GM10248 (cell line): ENCODE measurements at regions of chr7 and their contacts with region 1.

Region 1: DNA sequence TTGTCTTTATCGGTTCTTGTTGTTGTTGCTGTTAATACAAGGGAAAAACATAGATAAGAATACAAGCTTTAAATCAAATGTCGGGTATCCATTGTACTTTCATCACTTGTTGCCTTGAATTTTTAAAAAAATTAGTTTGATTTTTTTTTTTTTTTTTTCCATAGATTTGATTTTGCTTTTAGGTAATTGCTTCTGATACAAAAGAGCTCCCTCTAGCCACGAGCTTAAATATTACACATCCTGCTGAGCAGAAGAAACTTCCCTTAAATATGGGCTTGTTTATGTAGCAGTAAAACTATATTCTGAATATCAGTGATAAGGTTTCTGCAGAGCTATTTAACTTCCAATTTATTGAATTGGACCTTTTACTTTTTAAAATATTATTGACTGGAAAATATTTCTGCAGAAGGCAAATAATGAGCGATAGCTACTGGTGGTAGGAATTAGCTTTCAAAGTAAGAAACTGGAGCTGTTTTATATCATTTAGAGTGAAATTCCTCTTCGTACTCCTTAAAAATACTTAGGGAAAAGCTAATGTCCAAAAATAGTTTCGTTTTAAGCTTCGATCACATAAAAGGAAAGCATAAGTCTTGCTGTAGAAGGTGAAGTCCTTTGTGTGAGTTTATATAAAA is 216.9 kb downstream of the POLR1F start:
- DNase-seq: peak; percentile 14
- CTCF ChIP-seq: peak; percentile 53

Region 2: DNA sequence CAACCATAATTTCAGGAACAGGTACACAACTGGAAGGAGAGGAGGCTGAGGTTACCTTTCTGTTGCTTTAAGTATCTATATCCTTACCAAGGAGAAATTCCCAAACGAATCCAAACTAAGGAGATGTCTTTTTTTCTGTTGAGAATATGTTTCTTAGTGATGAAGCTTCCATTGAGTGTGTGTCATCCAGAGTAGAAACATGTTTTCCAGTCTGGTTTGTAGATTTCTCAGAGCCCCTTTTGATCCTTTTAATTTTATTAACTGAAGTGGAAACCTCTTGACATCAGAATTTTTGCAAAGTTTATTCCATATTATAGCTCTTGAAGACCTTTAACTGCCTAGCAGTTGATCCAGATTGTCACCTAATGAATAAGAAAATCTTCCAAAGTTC is 139.6 kb before region 1 on chr7:
- CTCF ChIA-PET with region 1: no interaction called
- POLR2A ChIA-PET with region 1: no interaction called
- DNase-seq: no peak
- CTCF ChIP-seq: no peak

Region 3: GRCh38 chr7:19470031-19470430 is 21.9 kb before region 1 on chr7:
- CTCF ChIA-PET with region 1: no interaction called
- POLR2A ChIA-PET with region 1: no interaction called
- DNase-seq: no peak
- CTCF ChIP-seq: no peak

Region 4: GRCh38 chr7:19480383-19480782 is 11.6 kb before region 1 on chr7:
- CTCF ChIA-PET with region 1: interaction called, 15 read pairs
- POLR2A ChIA-PET with region 1: no interaction called
- DNase-seq: no peak
- CTCF ChIP-seq: no peak